Caco-2 (cell line): ENCODE measurements at regions of chr4 and their contacts with region 1.

Region 1: DNA sequence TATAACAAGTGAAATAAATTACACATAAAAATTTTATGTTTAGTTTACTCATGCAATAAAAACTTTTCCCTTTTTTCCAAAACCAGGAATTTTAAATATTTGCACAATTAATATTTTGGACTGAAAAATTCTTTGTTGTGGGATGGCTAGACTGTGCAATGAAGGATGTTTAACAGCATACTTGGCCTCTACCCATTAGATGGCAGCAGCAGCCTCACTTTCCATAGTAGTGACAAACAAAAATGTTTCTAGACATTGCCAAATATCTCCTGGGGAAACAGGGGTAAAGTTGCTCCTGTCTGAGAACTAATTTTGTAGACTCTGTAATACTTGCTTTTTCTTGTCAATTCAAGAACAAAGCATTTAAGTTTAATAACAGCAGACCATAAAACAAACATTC is 49.8 kb downstream of the SCLT1 start:
- DNase-seq: peak in 1 of 2 experiments; percentile 8
- H3K4me3 ChIP-seq: no peak overlapping the region
- H3K4me3 Mint-ChIP-seq: no peak overlapping the region
- H3K27ac Mint-ChIP-seq: no peak overlapping the region
- H3K4me1 ChIP-seq: no peaks in the 10 kb centered on the region
- H3K4me1 Mint-ChIP-seq: no peaks in the 10 kb centered on the region
- H3K27me3 ChIP-seq: no peaks in the 10 kb centered on the region
- H3K27me3 Mint-ChIP-seq: no peaks in the 10 kb centered on the region
- CTCF ChIP-seq: peak in 1 of 2 experiments; percentile 16

Region 2: GRCh38 chr4:129093191-129093920 is 49.8 kb after region 1 on chr4 and contains the start of gene SCLT1:
- CTCF ChIA-PET with region 1: no interaction called
- POLR2A ChIA-PET with region 1: no interaction called
- intact Hi-C with region 1: loop called (anchors 5 kb)
- DNase-seq: peak; percentile 97
- H3K4me3 ChIP-seq: peak within 1 kb of the TSS; percentile 80
- H3K4me3 Mint-ChIP-seq: no peak within 1 kb of the TSS
- H3K27ac Mint-ChIP-seq: no peak within 1 kb of the TSS
- H3K4me1 ChIP-seq: peaks cover 11% of the 10 kb centered on the region; the same call in 1 of the 2 replicates
- H3K4me1 Mint-ChIP-seq: peaks cover 8% of the 10 kb centered on the region
- H3K27me3 ChIP-seq: no peaks in the 10 kb centered on the region
- H3K27me3 Mint-ChIP-seq: no peaks in the 10 kb centered on the region
- CTCF ChIP-seq: no peak
- total RNA-seq, gene SCLT1: 9.3 and 10.9 TPM in 2 replicates

Region 3: GRCh38 chr4:129167640-129168260 is 124.2 kb after region 1 on chr4:
- CTCF ChIA-PET with region 1: no interaction called
- POLR2A ChIA-PET with region 1: no interaction called
- intact Hi-C with region 1: loop called (anchors 1 kb)
- DNase-seq: peak in 1 of 2 experiments; percentile 14
- H3K4me3 ChIP-seq: no peak overlapping the region
- H3K4me3 Mint-ChIP-seq: no peak overlapping the region
- H3K27ac Mint-ChIP-seq: no peak overlapping the region
- H3K4me1 ChIP-seq: no peaks in the 10 kb centered on the region
- H3K4me1 Mint-ChIP-seq: no peaks in the 10 kb centered on the region
- H3K27me3 ChIP-seq: no peaks in the 10 kb centered on the region
- H3K27me3 Mint-ChIP-seq: peaks cover 18% of the 10 kb centered on the region
- CTCF ChIP-seq: peak in 1 of 2 experiments; percentile 30